Motor neuron (in vitro differentiated cells): ENCODE measurements at regions of chr16 and their contacts with region 1.

Region 1: GRCh38 chr16:84672276-84673202 is 24.2 kb downstream of the KLHL36 start:
- ATAC-seq: peak; percentile 59 to 98 (median 75)
- H3K4me3 ChIP-seq: no peak overlapping the region
- H3K27ac ChIP-seq: no peak overlapping the region
- H3K4me1 ChIP-seq: peaks cover 0 to 2% of the 10 kb centered on the region in 2 donors

Region 2: GRCh38 chr16:84726079-84726668 is 53.6 kb after region 1 on chr16:
- in situ Hi-C with region 1: loop called in 2 of 9 experiments (anchors 10 kb)
- ATAC-seq: peak; percentile 68 to 89 (median 85)
- H3K4me3 ChIP-seq: no peak overlapping the region
- H3K27ac ChIP-seq: no peak overlapping the region
- H3K4me1 ChIP-seq: peaks cover 37 to 45% of the 10 kb centered on the region in 2 donors